CD4-positive, alpha-beta T cell (primary cell): ENCODE measurements at regions of chr4 and their contacts with region 1.

Region 1: DNA sequence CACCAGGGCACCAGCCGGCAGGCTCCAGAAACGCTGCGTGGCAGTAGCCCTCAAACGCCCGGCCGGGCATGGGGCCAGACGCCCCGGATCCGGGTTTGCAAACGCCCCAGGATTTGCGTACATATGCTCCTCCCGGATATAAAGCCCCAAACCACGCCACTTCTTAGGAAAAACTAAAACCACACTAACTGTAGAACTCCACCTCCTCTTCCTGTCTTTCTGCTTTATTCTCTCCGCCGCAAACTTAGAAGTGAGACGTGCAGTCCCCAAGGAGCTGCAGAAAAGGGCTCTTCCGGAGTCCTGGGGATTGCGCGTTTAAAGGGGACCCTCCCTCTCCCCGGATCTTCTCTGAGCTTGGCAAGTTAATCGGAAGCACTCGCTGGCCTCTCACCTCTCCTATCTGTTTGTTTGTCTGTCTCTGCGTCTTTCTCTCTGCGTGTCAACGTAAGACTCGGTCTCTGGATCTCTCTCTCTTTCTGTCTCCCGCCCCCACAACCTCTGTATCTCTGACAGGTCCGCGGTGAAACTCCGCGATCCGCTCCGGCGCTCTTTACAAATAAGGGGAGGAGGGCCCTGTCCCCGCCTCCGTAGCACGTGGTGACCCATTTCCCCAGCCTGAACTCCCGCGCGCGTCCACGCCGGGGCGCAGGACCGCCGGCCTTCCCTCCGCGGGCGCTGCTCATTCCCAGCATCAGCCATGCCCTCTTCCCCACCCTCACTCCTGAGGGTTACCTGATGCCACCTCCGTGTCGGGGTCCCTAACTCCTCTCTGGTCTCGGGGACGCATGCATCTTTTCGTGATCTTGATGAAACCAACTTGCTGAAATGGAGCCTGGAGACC is at the start of gene SLC39A8:
- DNase-seq: peak; percentile 71 to 95 (median 81)
- ATAC-seq: peak; percentile 80
- H3K4me3 ChIP-seq: peak within 1 kb of the TSS; percentile 82
- H3K4me3 Mint-ChIP-seq: peak within 1 kb of the TSS; percentile 87
- H3K27ac ChIP-seq: peak within 1 kb of the TSS; percentile 88 to 93
- H3K27ac Mint-ChIP-seq: peak within 1 kb of the TSS; percentile 88
- H3K4me1 ChIP-seq: peaks cover 25% of the 10 kb centered on the region
- H3K4me1 Mint-ChIP-seq: peaks cover 47% of the 10 kb centered on the region
- H3K27me3 ChIP-seq: no peaks in the 10 kb centered on the region
- H3K27me3 Mint-ChIP-seq: no peaks in the 10 kb centered on the region
- CTCF ChIP-seq: peak; percentile 95
- total RNA-seq, gene SLC39A8: 17.9 to 18.0 TPM

Region 2: GRCh38 chr4:101944649-101945048 is 400.5 kb before region 1 on chr4:
- CTCF ChIA-PET with region 1: no interaction called
- POLR2A ChIA-PET with region 1: no interaction called
- intact Hi-C with region 1: no loop called
- DNase-seq: no peak
- ATAC-seq: no peak
- H3K4me3 ChIP-seq: no peak overlapping the region
- H3K4me3 Mint-ChIP-seq: no peak overlapping the region
- H3K27ac ChIP-seq: no peak overlapping the region
- H3K27ac Mint-ChIP-seq: no peak overlapping the region
- H3K4me1 ChIP-seq: no peaks in the 10 kb centered on the region
- H3K4me1 Mint-ChIP-seq: no peaks in the 10 kb centered on the region
- H3K27me3 ChIP-seq: no peaks in the 10 kb centered on the region
- H3K27me3 Mint-ChIP-seq: peaks cover 14% of the 10 kb centered on the region
- CTCF ChIP-seq: no peak

Region 3: GRCh38 chr4:102430461-102430910 is 85.3 kb after region 1 on chr4:
- CTCF ChIA-PET with region 1: interaction called, 5 read pairs
- POLR2A ChIA-PET with region 1: interaction called, 7 read pairs
- intact Hi-C with region 1: loop called (anchors 1 to 2 kb)
- DNase-seq: peak in 1 of 14 experiments; percentile 13
- ATAC-seq: no peak
- H3K4me3 ChIP-seq: peak overlapping the region; percentile 66
- H3K4me3 Mint-ChIP-seq: peak overlapping the region; percentile 87
- H3K27ac ChIP-seq: no peak overlapping the region
- H3K27ac Mint-ChIP-seq: peak overlapping the region; percentile 74
- H3K4me1 ChIP-seq: no peaks in the 10 kb centered on the region
- H3K4me1 Mint-ChIP-seq: peaks cover 6% of the 10 kb centered on the region
- H3K27me3 ChIP-seq: no peaks in the 10 kb centered on the region
- H3K27me3 Mint-ChIP-seq: no peaks in the 10 kb centered on the region
- CTCF ChIP-seq: no peak

Region 4: GRCh38 chr4:102610007-102610406 is 264.8 kb after region 1 on chr4:
- CTCF ChIA-PET with region 1: no interaction called
- POLR2A ChIA-PET with region 1: no interaction called
- intact Hi-C with region 1: loop called in 1 of 2 experiments (anchors 5 kb)
- DNase-seq: no peak
- ATAC-seq: no peak
- H3K4me3 ChIP-seq: no peak overlapping the region
- H3K4me3 Mint-ChIP-seq: no peak overlapping the region
- H3K27ac ChIP-seq: no peak overlapping the region
- H3K27ac Mint-ChIP-seq: no peak overlapping the region
- H3K4me1 ChIP-seq: peaks cover 42% of the 10 kb centered on the region
- H3K4me1 Mint-ChIP-seq: peaks cover 74% of the 10 kb centered on the region
- H3K27me3 ChIP-seq: no peaks in the 10 kb centered on the region
- H3K27me3 Mint-ChIP-seq: no peaks in the 10 kb centered on the region
- CTCF ChIP-seq: no peak

Region 5: DNA sequence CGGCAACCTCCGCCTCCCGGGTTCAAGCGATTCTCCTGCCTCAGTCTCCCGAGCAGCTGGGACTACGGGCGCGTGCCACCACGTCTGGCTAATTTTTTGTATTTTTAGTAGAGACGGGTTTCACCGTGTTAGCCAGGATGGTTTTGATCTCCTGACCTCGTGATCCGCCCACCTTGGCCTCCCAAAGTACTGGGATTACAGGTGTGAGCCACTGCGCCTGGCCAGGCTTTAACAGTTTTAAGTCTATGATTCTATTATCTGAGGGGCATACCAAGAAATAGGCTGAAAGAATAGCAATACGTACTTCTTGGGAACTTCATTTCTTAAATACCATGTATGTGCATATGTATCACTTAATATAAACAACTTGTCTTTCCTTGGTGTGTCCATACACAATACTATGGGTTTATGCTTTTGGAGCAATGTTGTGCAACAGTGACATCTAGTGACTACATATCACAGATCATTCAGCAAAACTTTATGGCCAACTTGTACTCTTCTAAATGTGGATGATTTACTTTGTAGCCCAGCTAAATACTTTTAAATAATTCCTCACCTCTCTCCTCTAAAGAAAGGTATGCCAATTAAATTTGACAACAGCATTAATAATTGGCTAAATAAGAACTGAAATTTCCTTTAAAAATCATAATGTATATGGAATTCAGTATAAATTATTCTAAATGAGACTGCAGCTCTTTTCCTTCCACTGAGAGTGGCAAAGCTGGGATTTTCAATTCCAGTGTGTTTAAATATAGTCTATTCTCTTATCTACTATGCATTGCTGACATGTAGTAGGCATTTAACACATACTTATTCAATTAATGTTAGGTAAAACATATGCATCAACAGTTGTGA is 663.9 kb after region 1 on chr4:
- CTCF ChIA-PET with region 1: no interaction called
- POLR2A ChIA-PET with region 1: no interaction called
- intact Hi-C with region 1: loop called in 1 of 2 experiments (anchors 1 kb)
- DNase-seq: peak in 4 of 14 experiments; percentile 33 to 84 (median 76)
- ATAC-seq: peak; percentile 96
- H3K4me3 ChIP-seq: no peak overlapping the region
- H3K4me3 Mint-ChIP-seq: no peak overlapping the region
- H3K27ac ChIP-seq: no peak overlapping the region
- H3K27ac Mint-ChIP-seq: no peak overlapping the region
- H3K4me1 ChIP-seq: no peaks in the 10 kb centered on the region
- H3K4me1 Mint-ChIP-seq: no peaks in the 10 kb centered on the region
- H3K27me3 ChIP-seq: no peaks in the 10 kb centered on the region
- H3K27me3 Mint-ChIP-seq: no peaks in the 10 kb centered on the region
- CTCF ChIP-seq: peak; percentile 77

Region 6: DNA sequence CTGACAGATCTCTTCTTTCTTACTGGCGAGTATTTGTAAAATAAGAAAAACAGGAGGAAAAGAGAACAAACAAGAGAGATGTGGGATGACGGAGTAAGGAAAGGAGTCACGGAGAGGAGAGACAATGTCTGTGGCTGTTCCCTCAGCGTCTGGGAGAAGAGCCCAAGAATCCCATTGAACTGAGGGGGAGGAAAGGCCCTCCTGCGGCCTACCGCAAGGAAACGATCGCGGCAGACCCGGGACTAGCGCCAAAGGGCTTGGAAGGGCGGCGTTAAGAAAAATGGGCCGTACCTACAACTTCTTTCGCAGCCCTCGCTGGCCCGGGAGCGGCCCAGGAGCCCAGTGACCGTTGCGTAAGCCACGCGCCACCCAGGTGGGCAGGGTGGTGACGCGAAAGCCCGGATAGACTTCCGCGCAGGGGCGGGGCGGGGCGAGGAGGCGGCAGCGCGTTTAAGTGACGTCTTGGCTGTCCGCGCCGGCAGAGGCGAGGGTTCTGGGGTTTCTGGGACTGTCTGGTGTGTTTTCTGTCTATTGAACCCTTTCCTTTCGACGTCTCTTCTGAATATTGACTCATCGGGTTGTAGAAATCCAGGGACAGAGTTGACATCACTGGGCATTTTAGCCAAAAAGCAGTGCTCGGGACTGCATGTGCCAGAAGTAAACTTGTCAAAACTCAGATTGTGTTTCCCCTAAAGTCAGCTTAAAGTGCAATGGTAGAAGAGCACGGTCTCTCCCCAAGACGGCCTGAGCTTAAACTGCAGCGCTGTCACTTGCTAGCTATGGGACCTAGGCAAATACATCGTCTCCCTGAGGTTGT is 674.3 kb after region 1 on chr4 and contains the start of gene SLC9B1:
- CTCF ChIA-PET with region 1: no interaction called
- POLR2A ChIA-PET with region 1: interaction called, 4 read pairs
- intact Hi-C with region 1: loop called in 1 of 2 experiments (anchors 5 kb)
- DNase-seq: peak; percentile 84 to 96 (median 91)
- ATAC-seq: peak; percentile 89
- H3K4me3 ChIP-seq: peak within 1 kb of the TSS; percentile 64
- H3K4me3 Mint-ChIP-seq: peak within 1 kb of the TSS; percentile 91
- H3K27ac ChIP-seq: peak within 1 kb of the TSS; percentile 65 to 94
- H3K27ac Mint-ChIP-seq: peak within 1 kb of the TSS; percentile 99
- H3K4me1 ChIP-seq: peaks cover 22% of the 10 kb centered on the region
- H3K4me1 Mint-ChIP-seq: peaks cover 25% of the 10 kb centered on the region
- H3K27me3 ChIP-seq: no peaks in the 10 kb centered on the region
- H3K27me3 Mint-ChIP-seq: no peaks in the 10 kb centered on the region
- CTCF ChIP-seq: no peak
- total RNA-seq, gene SLC9B1: 3.6 to 3.7 TPM

Region 7: DNA sequence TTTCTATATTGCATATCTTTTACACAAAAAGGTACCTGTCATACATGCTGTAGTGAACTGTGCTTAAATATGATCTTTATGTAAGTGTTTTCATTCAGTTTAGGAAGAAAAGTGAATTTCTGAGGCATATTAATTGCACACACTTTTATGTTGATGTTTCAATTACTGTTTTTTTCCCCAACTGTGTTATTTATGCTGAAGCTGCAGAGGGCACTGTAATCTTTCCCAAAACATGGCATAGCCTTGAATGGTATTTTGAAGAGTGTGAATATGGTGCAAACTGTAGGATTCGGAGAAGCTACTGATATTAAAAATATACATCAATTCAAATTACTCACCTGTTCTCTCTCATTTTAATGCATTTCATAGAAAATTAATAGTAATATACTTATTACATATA is 858.9 kb after region 1 on chr4:
- CTCF ChIA-PET with region 1: no interaction called
- POLR2A ChIA-PET with region 1: no interaction called
- intact Hi-C with region 1: loop called in 1 of 2 experiments (anchors 10 kb)
- DNase-seq: no peak
- ATAC-seq: no peak
- H3K4me3 ChIP-seq: no peak overlapping the region
- H3K4me3 Mint-ChIP-seq: no peak overlapping the region
- H3K27ac ChIP-seq: no peak overlapping the region
- H3K27ac Mint-ChIP-seq: no peak overlapping the region
- H3K4me1 ChIP-seq: peaks cover under 1% of the 10 kb centered on the region
- H3K4me1 Mint-ChIP-seq: no peaks in the 10 kb centered on the region
- H3K27me3 ChIP-seq: no peaks in the 10 kb centered on the region
- H3K27me3 Mint-ChIP-seq: peaks cover 3% of the 10 kb centered on the region
- CTCF ChIP-seq: no peak